Sigmoid colon (tissue), 7 donors: ENCODE measurements at regions of chr12 and their contacts with region 1.

Region 1: DNA sequence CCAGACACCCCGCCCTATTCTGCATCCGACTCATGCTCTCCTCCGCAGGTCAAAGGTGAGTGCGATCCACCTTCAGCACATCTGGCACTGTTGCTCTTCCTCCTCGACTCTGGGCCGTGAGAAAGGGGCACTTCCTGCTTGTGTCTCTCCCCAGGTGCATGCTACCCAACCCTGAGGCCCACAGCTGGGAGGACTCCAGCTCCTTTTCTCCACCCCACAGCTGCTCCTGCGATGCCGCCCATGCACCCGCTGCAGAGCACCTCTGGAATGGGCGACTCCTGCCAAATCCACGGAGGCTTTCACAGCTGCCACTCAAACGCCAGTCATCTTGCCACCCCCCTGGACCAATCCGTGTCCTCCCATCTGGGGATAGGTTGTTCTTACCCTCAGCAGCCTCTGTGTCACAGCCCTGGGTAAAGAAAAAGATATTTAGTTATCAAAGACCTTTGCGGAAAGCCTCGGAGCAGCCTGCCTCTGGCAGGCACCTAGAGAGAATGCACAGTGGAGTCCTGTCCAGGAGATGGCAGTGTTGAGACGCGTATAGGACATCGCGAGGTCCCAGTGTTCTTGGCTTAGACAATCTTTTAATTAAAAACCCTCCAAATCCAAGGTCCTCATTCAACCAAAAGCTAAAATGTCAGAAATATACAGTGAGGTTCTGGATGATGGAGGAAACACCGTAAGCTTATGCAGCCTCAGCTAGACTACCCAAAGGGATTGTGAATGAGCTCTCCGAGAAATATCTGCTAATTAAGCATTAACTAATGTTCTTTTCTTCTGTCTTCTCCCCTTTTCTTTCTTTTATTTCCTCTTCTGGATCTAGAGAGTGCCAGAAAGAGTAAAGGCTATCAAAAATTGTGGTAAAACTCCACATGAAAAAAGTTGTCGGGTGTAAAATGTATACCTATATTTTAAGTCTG is 54.3 kb downstream of the MYRFL start:
- DNase-seq: no peak
- H3K4me3 ChIP-seq: no peak overlapping the region
- H3K27ac ChIP-seq: no peak overlapping the region
- H3K4me1 ChIP-seq: peaks cover 0 to 8% (median 3%) of the 10 kb centered on the region in 4 donors
- H3K27me3 ChIP-seq: peaks cover 0 to 12% (median 0%) of the 10 kb centered on the region in 3 donors
- CTCF ChIP-seq: peak; percentile 29 to 74 (median 68)
- EP300 ChIP-seq: no peak
- POLR2A ChIP-seq: no peak

Region 2: DNA sequence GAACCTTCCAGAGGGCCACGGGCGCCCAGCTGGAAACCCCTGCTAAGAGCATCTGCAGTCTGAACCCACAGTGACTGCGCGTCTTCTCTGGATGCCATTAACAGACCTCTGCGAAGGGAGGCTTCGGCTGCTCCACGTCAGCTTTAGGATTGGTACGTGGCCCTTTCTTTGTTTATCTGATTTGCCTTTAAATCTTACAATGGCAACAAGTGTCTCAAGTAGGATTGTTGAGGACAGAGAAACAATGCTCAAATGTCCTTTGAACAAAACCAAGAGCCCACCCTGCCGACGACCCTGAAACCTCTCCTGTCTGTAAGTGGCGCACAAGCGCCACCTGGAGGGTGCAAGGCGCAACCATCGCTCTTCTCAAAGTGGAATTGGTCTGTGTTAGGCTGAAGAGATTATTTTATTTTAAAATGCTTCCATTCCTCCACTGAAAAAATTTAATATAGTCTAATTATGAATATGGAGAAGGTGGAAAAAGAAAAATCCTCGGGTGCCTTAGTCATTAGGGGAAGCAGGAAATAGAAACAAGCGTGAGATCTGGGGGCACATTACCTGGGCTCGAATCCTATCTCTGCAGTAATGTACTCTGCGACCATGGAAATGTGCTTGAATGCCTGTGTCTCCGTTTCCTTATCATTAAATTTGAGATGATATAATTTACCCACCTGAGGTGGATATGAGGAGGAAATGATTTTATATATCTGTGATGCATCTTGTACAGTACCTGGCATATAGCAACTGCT is 840.5 kb after region 1 on chr12:
- intact Hi-C with region 1: loop called (anchors 5 kb)
- DNase-seq: peak; percentile 66
- H3K4me3 ChIP-seq: peak overlapping the region in 1 of 4 donors; percentile 16
- H3K27ac ChIP-seq: peak overlapping the region in 1 of 4 donors; percentile 33
- H3K4me1 ChIP-seq: no peaks in the 10 kb centered on the region
- H3K27me3 ChIP-seq: peaks cover 0 to 14% (median 0%) of the 10 kb centered on the region in 3 donors
- CTCF ChIP-seq: peak in 3 of 4 experiments; percentile 54 to 76 (median 72)
- EP300 ChIP-seq: no peak
- POLR2A ChIP-seq: no peak

Region 3: GRCh38 chr12:70733385-70733784 is 854.1 kb after region 1 on chr12:
- intact Hi-C with region 1: loop called (anchors 5 kb)
- DNase-seq: no peak
- H3K4me3 ChIP-seq: no peak overlapping the region
- H3K27ac ChIP-seq: no peak overlapping the region
- H3K4me1 ChIP-seq: no peaks in the 10 kb centered on the region
- H3K27me3 ChIP-seq: no peaks in the 10 kb centered on the region
- CTCF ChIP-seq: peak in 3 of 4 experiments; percentile 6 to 37 (median 22)
- EP300 ChIP-seq: no peak
- POLR2A ChIP-seq: no peak